Transverse colon (tissue), 4 donors: ENCODE measurements at regions of chr6 and their contacts with region 1.

Region 1: GRCh38 chr6:138115877-138116660 is 8.8 kb upstream of the PERP start:
- DNase-seq: peak; percentile 42
- H3K4me3 ChIP-seq: no peak overlapping the region
- H3K27ac ChIP-seq: no peak overlapping the region
- H3K4me1 ChIP-seq: no peaks in the 10 kb centered on the region
- H3K27me3 ChIP-seq: peaks cover 8% of the 10 kb centered on the region
- CTCF ChIP-seq: peak; percentile 65 to 86 (median 74)
- EP300 ChIP-seq: no peak
- POLR2A ChIP-seq: no peak

Region 2: GRCh38 chr6:136613477-136613876 is 1502.6 kb before region 1 on chr6:
- in situ Hi-C with region 1: no loop called
- intact Hi-C with region 1: no loop called
- DNase-seq: no peak
- H3K4me3 ChIP-seq: no peak overlapping the region
- H3K27ac ChIP-seq: no peak overlapping the region
- H3K4me1 ChIP-seq: peaks cover 5 to 19% (median 16%) of the 10 kb centered on the region in 4 donors
- H3K27me3 ChIP-seq: no peaks in the 10 kb centered on the region
- CTCF ChIP-seq: no peak
- EP300 ChIP-seq: no peak
- POLR2A ChIP-seq: no peak

Region 3: GRCh38 chr6:137707590-137708360 is 408.3 kb before region 1 on chr6:
- in situ Hi-C with region 1: loop called in 2 of 4 experiments (anchors 25 kb)
- intact Hi-C with region 1: loop called (anchors 10 kb)
- DNase-seq: peak; percentile 81
- H3K4me3 ChIP-seq: no peak overlapping the region
- H3K27ac ChIP-seq: peak overlapping the region; percentile 13 to 53 (median 30)
- H3K4me1 ChIP-seq: peaks cover 0 to 41% (median 7%) of the 10 kb centered on the region in 4 donors
- H3K27me3 ChIP-seq: no peaks in the 10 kb centered on the region
- CTCF ChIP-seq: peak; percentile 76 to 88 (median 80)
- EP300 ChIP-seq: no peak
- POLR2A ChIP-seq: no peak

Region 4: GRCh38 chr6:138287144-138287955 is 171.3 kb after region 1 on chr6:
- in situ Hi-C with region 1: loop called in 3 of 4 experiments (anchors 10 kb)
- intact Hi-C with region 1: loop called (anchors 5 kb)
- DNase-seq: peak; percentile 67
- H3K4me3 ChIP-seq: no peak overlapping the region
- H3K27ac ChIP-seq: no peak overlapping the region
- H3K4me1 ChIP-seq: no peaks in the 10 kb centered on the region
- H3K27me3 ChIP-seq: no peaks in the 10 kb centered on the region
- CTCF ChIP-seq: peak; percentile 47 to 77 (median 63)
- EP300 ChIP-seq: no peak
- POLR2A ChIP-seq: no peak

Region 5: GRCh38 chr6:138372711-138373463 is 256.8 kb after region 1 on chr6:
- in situ Hi-C with region 1: no loop called
- intact Hi-C with region 1: no loop called
- DNase-seq: no peak
- H3K4me3 ChIP-seq: no peak overlapping the region
- H3K27ac ChIP-seq: no peak overlapping the region
- H3K4me1 ChIP-seq: no peaks in the 10 kb centered on the region
- H3K27me3 ChIP-seq: no peaks in the 10 kb centered on the region
- CTCF ChIP-seq: no peak
- EP300 ChIP-seq: no peak
- POLR2A ChIP-seq: no peak

Region 6: DNA sequence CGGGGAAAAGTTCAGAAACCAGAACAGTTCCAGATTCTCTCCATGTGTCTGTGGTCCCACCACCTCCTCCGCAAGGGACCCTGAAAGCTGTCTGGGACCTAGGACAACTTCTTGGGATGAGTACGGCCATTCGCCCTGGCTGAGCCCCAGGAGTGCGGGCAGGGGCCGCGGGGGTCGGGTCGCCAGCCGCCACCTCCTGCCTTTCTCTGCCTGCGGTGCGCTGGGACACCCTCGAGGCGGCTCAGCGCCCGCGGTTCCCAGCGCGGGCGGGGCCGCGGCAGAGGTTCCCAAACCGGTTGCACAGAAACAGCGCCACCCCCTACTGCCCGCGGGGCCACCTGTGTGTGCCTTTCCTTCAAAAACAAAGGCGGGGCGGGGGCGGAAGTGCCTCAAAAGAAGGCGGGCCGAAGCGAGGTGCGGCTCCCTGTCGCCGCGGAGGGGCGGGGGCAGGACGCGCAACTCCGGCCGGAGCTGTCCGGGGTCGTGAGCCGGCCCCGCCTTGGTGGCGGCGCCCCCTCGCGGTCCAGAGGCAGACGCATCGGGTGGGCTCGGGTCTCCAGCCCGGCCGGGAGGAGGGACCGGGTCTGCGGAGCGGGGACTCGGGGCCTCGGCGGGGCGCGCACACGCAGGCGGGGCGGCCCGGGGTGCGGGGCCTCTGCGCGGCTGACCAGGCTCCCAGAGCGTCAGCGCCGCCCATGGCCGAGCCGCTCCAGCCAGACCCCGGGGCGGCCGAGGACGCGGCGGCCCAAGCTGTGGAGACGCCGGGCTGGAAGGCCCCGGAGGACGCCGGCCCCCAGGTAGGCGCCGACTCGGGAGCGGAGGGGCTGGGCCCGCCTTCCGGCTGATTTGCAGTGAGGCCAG is 288.0 kb after region 1 on chr6 and contains the start of gene HEBP2:
- in situ Hi-C with region 1: loop called in 3 of 4 experiments (anchors 10 to 25 kb)
- intact Hi-C with region 1: loop called (anchors 10 kb)
- DNase-seq: peak; percentile 97
- H3K4me3 ChIP-seq: peak within 1 kb of the TSS; percentile 66 to 86 (median 82)
- H3K27ac ChIP-seq: peak within 1 kb of the TSS; percentile 94 to 97 (median 95)
- H3K4me1 ChIP-seq: peaks cover 0 to 19% (median 14%) of the 10 kb centered on the region in 4 donors
- H3K27me3 ChIP-seq: no peaks in the 10 kb centered on the region
- CTCF ChIP-seq: peak in 4 of 5 experiments; percentile 38 to 49 (median 42)
- EP300 ChIP-seq: no peak
- POLR2A ChIP-seq: peak; percentile 89
- total RNA-seq, gene HEBP2: 33.3 to 77.8 (median 73.4) TPM

Region 7: GRCh38 chr6:138517635-138518034 is 401.6 kb after region 1 on chr6:
- in situ Hi-C with region 1: loop called in 3 of 4 experiments (anchors 10 to 25 kb)
- intact Hi-C with region 1: no loop called
- DNase-seq: peak; percentile 63
- H3K4me3 ChIP-seq: no peak overlapping the region
- H3K27ac ChIP-seq: no peak overlapping the region
- H3K4me1 ChIP-seq: peaks cover 0 to 6% (median 0%) of the 10 kb centered on the region in 4 donors
- H3K27me3 ChIP-seq: no peaks in the 10 kb centered on the region
- CTCF ChIP-seq: peak; percentile 57 to 74 (median 66)
- EP300 ChIP-seq: no peak
- POLR2A ChIP-seq: no peak

Region 8: DNA sequence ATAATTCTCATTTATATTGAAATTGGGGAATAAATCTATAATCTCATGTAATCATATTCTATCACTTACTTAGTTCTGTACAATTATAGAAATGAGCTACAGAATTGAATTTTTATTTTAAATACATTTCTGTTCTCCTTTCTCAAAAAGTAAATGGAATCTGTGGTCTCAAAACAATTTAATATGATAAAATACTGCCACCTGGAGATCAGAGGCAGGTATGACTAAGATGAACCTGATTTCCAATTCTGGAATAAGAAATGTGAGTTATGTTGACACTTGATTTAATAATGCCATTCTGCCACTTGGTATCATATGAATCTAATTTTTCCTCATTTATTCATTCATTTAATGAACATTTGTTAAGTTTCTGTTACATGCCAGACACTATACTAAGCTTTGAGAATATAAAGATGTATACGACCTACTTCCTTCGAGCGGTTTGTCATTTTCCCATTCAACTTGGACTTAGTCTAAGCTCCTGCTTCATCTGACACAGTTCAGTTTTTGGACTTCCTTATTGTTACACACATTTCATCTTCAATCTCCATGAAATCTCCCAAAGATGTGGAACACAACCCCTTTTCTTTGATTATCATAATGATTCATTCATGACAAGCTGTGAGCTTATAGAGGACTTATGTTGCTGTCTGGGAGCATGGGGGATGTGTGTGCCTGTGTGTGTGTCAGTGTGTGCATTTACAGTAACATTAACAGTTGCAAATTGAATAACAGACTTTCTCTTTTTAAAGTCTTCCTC is 650.0 kb after region 1 on chr6:
- in situ Hi-C with region 1: loop called in 2 of 4 experiments (anchors 10 to 25 kb)
- intact Hi-C with region 1: loop called (anchors 10 kb)
- DNase-seq: no peak
- H3K4me3 ChIP-seq: no peak overlapping the region
- H3K27ac ChIP-seq: no peak overlapping the region
- H3K4me1 ChIP-seq: no peaks in the 10 kb centered on the region
- H3K27me3 ChIP-seq: no peaks in the 10 kb centered on the region
- CTCF ChIP-seq: peak; percentile 56 to 75 (median 62)
- EP300 ChIP-seq: no peak
- POLR2A ChIP-seq: no peak